Activated naive CD4-positive, alpha-beta T cell treated with anti-CD3 and anti-CD28 coated beads for 36 hours (primary cell): ENCODE measurements at regions of chr1 and their contacts with region 1.

Region 1: DNA sequence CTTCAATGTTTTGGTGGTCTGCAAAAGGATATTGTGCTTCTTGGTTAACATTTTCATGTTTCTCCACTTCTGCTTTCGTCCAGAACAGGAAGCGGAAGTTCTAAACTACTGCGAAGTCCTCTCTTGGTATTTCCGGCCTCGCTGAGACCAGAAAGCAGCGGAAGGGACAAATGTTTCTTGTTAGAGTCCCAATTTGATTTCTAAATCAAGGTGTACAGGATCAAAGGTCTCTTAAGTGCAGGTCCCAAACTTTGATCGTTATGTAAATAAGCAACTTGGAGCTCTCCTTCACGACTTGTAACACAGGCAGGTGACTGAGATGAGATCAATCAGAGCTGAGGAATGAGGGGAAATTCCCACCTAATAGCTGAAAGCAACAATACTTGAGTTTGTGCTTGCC is 40.1 kb upstream of the HMCN1 start:
- DNase-seq: peak; percentile 45
- H3K4me3 Mint-ChIP-seq: peak overlapping the region; percentile 65
- H3K27ac Mint-ChIP-seq: peak overlapping the region; percentile 22
- H3K4me1 Mint-ChIP-seq: peaks cover 12% of the 10 kb centered on the region
- H3K27me3 Mint-ChIP-seq: no peaks in the 10 kb centered on the region

Region 2: DNA sequence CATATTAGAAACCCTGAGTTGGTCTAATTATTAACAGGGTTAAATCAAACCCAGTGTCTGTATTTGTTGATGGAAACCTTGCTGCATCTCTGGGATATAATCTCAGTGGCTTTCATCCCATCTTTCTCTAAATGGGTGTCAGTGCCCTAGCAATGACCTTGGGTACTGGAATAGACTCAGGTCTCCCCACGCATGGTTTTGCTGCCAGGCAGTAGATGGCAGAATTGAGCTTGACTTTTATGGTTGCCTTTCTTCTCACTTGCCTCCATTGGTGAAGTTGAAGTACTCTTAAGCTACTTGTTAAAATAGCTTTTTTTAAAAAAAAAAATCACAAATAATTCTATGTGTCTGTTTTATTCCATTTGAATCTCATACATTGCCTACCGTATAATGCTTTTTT is 41.7 kb before region 1 on chr1:
- CTCF ChIA-PET with region 1: interaction called, 5 read pairs
- intact Hi-C with region 1: loop called (anchors 1 kb)
- DNase-seq: no peak
- H3K4me3 Mint-ChIP-seq: no peak overlapping the region
- H3K27ac Mint-ChIP-seq: no peak overlapping the region
- H3K4me1 Mint-ChIP-seq: peaks cover 8% of the 10 kb centered on the region
- H3K27me3 Mint-ChIP-seq: no peaks in the 10 kb centered on the region